Naive thymus-derived CD8-positive, alpha-beta T cell (primary cell): ENCODE measurements at regions of chr18 and their contacts with region 1.

Region 1: GRCh38 chr18:63224630-63225029 is 94.9 kb downstream of the BCL2 start:
- DNase-seq: peak in 2 of 10 donors; percentile 15 to 42
- ATAC-seq: peak; percentile 83 to 89
- H3K4me3 Mint-ChIP-seq: peak overlapping the region; percentile 3 to 79 (median 60)
- H3K27ac Mint-ChIP-seq: peak overlapping the region; percentile 55 to 98 (median 88)
- H3K4me1 Mint-ChIP-seq: peaks cover 46 to 87% (median 79%) of the 10 kb centered on the region in 4 donors
- H3K27me3 Mint-ChIP-seq: no peaks in the 10 kb centered on the region

Region 2: GRCh38 chr18:62938487-62938886 is 286.1 kb before region 1 on chr18:
- POLR2A ChIA-PET with region 1: no interaction called
- DNase-seq: no peak
- ATAC-seq: no peak
- H3K4me3 Mint-ChIP-seq: peak overlapping the region in 1 of 10 donors; percentile 6
- H3K27ac Mint-ChIP-seq: peak overlapping the region in 2 of 10 donors; percentile 7 to 31
- H3K4me1 Mint-ChIP-seq: peaks cover 0 to 22% (median 8%) of the 10 kb centered on the region in 4 donors
- H3K27me3 Mint-ChIP-seq: no peaks in the 10 kb centered on the region

Region 3: GRCh38 chr18:63119647-63120046 is 105.0 kb before region 1 on chr18:
- POLR2A ChIA-PET with region 1: no interaction called
- DNase-seq: no peak
- ATAC-seq: no peak
- H3K4me3 Mint-ChIP-seq: no peak overlapping the region
- H3K27ac Mint-ChIP-seq: peak overlapping the region in 1 of 10 donors; percentile 61
- H3K4me1 Mint-ChIP-seq: peaks cover 0 to 9% (median 6%) of the 10 kb centered on the region in 4 donors
- H3K27me3 Mint-ChIP-seq: no peaks in the 10 kb centered on the region

Region 4: GRCh38 chr18:63207143-63207790 is 17.4 kb before region 1 on chr18:
- POLR2A ChIA-PET with region 1: interaction called, 12 read pairs
- DNase-seq: peak in 2 of 10 donors; percentile 26 to 33
- ATAC-seq: peak; percentile 46 to 64
- H3K4me3 Mint-ChIP-seq: peak overlapping the region; percentile 71 to 92 (median 78)
- H3K27ac Mint-ChIP-seq: peak overlapping the region; percentile 81 to 98 (median 92)
- H3K4me1 Mint-ChIP-seq: peaks cover 65 to 98% (median 96%) of the 10 kb centered on the region in 4 donors
- H3K27me3 Mint-ChIP-seq: no peaks in the 10 kb centered on the region